CD8-positive, alpha-beta T cell (primary cell): ENCODE measurements at regions of chr1 and their contacts with region 1.

Region 1: DNA sequence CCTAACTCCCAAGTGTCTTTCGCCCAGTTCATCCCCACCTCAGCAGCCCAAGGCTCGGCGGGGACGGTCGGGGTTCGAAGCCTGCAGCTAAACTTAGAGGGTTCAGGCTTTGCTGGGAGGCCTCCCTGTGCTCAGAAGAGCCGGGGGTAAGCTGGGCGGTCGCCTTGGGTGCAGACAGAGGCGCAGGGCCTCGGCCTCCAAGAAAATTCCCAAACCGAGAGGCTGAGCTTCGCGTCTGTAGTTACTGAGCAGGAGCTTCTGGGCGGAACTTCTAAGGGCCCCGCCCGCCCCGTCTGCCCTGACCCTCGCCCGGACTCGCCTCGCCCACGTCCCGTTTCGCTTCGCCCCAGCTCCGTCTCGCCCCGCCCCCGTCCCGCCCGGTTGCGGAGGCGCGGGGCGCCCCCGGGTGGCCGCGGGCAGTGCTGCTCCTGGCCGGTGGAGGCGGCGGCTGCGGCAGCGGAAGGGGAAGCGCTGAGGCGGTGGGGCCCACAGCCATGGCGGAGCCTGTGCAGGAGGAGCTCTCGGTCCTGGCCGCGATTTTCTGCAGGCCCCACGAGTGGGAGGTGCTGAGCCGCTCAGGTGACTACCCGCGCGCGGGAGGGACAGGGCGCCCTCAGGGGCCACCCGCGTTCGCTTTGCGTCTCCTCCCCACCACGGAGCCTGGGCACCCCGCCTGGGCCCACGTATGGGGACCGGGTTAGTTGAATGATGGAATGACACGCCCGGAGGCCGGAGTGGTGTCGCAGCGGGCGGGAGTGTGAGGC is at the start of gene RWDD3:
- DNase-seq: peak; percentile 89 to 96 (median 91)
- ATAC-seq: peak; percentile 93
- H3K4me3 ChIP-seq: peak within 1 kb of the TSS; percentile 79 to 93
- H3K4me3 Mint-ChIP-seq: peak within 1 kb of the TSS; percentile 85
- H3K27ac ChIP-seq: peak within 1 kb of the TSS; percentile 72 to 73
- H3K27ac Mint-ChIP-seq: peak within 1 kb of the TSS; percentile 90
- H3K4me1 ChIP-seq: peaks cover 15% of the 10 kb centered on the region
- H3K4me1 Mint-ChIP-seq: peaks cover 46% of the 10 kb centered on the region
- H3K27me3 ChIP-seq: no peaks in the 10 kb centered on the region
- H3K27me3 Mint-ChIP-seq: peaks cover 8% of the 10 kb centered on the region
- CTCF ChIP-seq: peak; percentile 79
- total RNA-seq, gene RWDD3: 14.9 to 17.8 TPM

Region 2: DNA sequence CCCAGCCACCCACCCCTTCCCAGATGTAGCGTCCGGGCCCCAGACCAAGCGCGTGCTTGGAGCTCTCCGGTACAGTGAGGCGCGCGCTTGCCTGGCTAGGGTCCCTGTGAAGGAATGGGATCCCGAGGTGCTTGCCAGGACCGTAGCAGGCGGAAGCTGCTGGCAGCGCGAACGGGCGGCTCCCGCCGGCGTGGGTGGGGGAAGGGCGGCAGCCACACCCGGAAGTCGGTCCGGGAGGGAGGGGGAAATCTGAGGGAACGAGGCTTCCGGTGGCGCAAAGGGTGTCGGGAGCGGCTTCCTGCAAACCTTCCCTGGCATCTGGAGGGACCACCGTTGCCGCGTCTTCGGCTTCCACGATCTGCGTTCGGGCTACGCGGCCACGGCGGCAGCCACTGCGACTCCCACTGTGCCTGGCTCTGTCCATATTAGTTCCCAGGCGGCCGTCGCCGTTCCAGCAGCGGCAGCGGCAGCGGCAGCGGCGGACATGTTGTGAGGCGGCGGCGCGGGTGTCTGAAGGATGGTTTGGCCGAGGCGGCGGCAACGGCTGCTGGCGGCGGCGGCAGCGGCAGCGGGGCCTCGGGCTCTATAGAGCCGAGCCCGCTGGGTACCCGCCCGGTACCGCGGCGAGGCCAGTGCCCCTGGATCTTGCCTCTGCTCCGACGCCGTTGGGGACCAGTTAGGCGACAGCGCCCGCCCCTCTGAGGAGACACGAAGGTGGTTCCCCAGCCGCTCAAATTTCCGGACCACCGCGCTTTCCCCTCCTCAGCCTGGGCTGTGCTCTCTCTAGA is 1888.1 kb before region 1 on chr1 and contains the start of gene DR1:
- CTCF ChIA-PET with region 1: no interaction called
- POLR2A ChIA-PET with region 1: no interaction called
- intact Hi-C with region 1: loop called (anchors 5 to 10 kb)
- DNase-seq: peak; percentile 81 to 94 (median 90)
- ATAC-seq: peak; percentile 74
- H3K4me3 ChIP-seq: peak within 1 kb of the TSS; percentile 80 to 81
- H3K4me3 Mint-ChIP-seq: peak within 1 kb of the TSS; percentile 95
- H3K27ac ChIP-seq: peak within 1 kb of the TSS; percentile 72 to 91
- H3K27ac Mint-ChIP-seq: peak within 1 kb of the TSS; percentile 98
- H3K4me1 ChIP-seq: peaks cover 32% of the 10 kb centered on the region
- H3K4me1 Mint-ChIP-seq: peaks cover 51% of the 10 kb centered on the region
- H3K27me3 ChIP-seq: no peaks in the 10 kb centered on the region
- H3K27me3 Mint-ChIP-seq: no peaks in the 10 kb centered on the region
- CTCF ChIP-seq: no peak
- total RNA-seq, gene DR1: 49.1 to 49.9 TPM

Region 3: GRCh38 chr1:94854458-94855306 is 379.2 kb before region 1 on chr1:
- CTCF ChIA-PET with region 1: interaction called, 8 read pairs
- POLR2A ChIA-PET with region 1: interaction called, 7 read pairs
- intact Hi-C with region 1: loop called (anchors 1 kb)
- DNase-seq: peak; percentile 53 to 88 (median 74)
- ATAC-seq: peak; percentile 98
- H3K4me3 ChIP-seq: peak overlapping the region; percentile 50 to 51
- H3K4me3 Mint-ChIP-seq: no peak overlapping the region
- H3K27ac ChIP-seq: peak overlapping the region in 1 of 2 experiments; percentile 13
- H3K27ac Mint-ChIP-seq: no peak overlapping the region
- H3K4me1 ChIP-seq: no peaks in the 10 kb centered on the region
- H3K4me1 Mint-ChIP-seq: no peaks in the 10 kb centered on the region
- H3K27me3 ChIP-seq: no peaks in the 10 kb centered on the region
- H3K27me3 Mint-ChIP-seq: peaks cover 6% of the 10 kb centered on the region
- CTCF ChIP-seq: peak; percentile 72

Region 4: GRCh38 chr1:94962409-94963265 is 271.3 kb before region 1 on chr1:
- CTCF ChIA-PET with region 1: interaction called, 4 read pairs
- POLR2A ChIA-PET with region 1: interaction called, 3 read pairs
- intact Hi-C with region 1: loop called in 1 of 2 experiments (anchors 10 kb)
- DNase-seq: peak in 7 of 9 experiments; percentile 4 to 64 (median 22)
- ATAC-seq: peak; percentile 38
- H3K4me3 ChIP-seq: peak overlapping the region; percentile 57 to 64
- H3K4me3 Mint-ChIP-seq: peak overlapping the region; percentile 96
- H3K27ac ChIP-seq: peak overlapping the region; percentile 44 to 67
- H3K27ac Mint-ChIP-seq: peak overlapping the region; percentile 98
- H3K4me1 ChIP-seq: peaks cover 15% of the 10 kb centered on the region
- H3K4me1 Mint-ChIP-seq: peaks cover 19% of the 10 kb centered on the region
- H3K27me3 ChIP-seq: no peaks in the 10 kb centered on the region
- H3K27me3 Mint-ChIP-seq: no peaks in the 10 kb centered on the region
- CTCF ChIP-seq: no peak

Region 5: DNA sequence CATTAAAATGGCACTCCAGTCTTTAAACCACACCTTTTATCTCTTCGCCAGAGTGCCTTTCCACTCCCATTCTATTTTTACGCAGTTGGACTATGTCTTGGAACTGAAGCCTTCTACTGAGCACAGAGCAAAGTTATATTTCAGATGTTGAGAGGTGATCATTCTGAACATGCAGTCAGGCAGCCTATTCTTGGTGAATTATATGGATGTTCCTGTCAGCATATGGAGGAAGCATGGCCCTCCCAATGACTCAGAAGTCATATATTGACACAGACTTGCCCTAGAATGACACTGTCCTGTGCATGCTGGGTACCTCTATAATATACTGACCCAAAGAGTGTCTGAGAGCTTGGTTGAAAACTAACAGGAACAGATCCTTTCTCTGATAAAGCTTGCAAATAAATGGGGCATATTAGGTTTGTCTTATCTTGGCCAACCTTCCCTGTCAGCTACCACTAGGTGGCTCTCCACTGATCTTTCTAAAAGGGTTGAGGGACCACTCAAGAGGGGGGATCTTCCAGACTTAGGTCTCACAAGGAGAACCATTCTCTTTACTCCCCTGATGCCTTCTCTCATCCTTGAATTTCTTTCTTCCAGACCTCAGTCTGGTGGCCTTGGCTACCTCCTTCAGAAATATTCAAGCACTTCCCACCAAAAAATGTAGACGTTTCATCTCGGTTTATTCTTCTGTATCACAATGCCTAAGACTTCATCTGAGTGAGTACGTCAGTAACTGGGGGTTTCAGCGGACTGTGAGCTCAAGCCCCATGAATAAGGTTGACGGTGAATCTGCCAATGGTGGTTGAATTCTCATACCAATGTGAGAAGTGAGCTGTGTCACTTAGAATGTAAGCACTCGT is 149.4 kb before region 1 on chr1:
- CTCF ChIA-PET with region 1: interaction called, 6 read pairs
- POLR2A ChIA-PET with region 1: interaction called, 4 read pairs
- intact Hi-C with region 1: loop called in 1 of 2 experiments (anchors 1 kb)
- DNase-seq: peak in 5 of 9 experiments; percentile 17 to 60 (median 19)
- ATAC-seq: peak; percentile 66
- H3K4me3 ChIP-seq: no peak overlapping the region
- H3K4me3 Mint-ChIP-seq: no peak overlapping the region
- H3K27ac ChIP-seq: no peak overlapping the region
- H3K27ac Mint-ChIP-seq: no peak overlapping the region
- H3K4me1 ChIP-seq: no peaks in the 10 kb centered on the region
- H3K4me1 Mint-ChIP-seq: peaks cover 4% of the 10 kb centered on the region
- H3K27me3 ChIP-seq: no peaks in the 10 kb centered on the region
- H3K27me3 Mint-ChIP-seq: peaks cover 9% of the 10 kb centered on the region
- CTCF ChIP-seq: peak; percentile 63

Region 6: GRCh38 chr1:95246511-95246910 is 12.6 kb after region 1 on chr1:
- CTCF ChIA-PET with region 1: interaction called, 23 read pairs
- POLR2A ChIA-PET with region 1: interaction called, 13 read pairs
- intact Hi-C with region 1: no loop called
- DNase-seq: no peak
- ATAC-seq: no peak
- H3K4me3 ChIP-seq: no peak overlapping the region
- H3K4me3 Mint-ChIP-seq: no peak overlapping the region
- H3K27ac ChIP-seq: no peak overlapping the region
- H3K27ac Mint-ChIP-seq: no peak overlapping the region
- H3K4me1 ChIP-seq: no peaks in the 10 kb centered on the region
- H3K4me1 Mint-ChIP-seq: peaks cover 19% of the 10 kb centered on the region
- H3K27me3 ChIP-seq: no peaks in the 10 kb centered on the region
- H3K27me3 Mint-ChIP-seq: no peaks in the 10 kb centered on the region
- CTCF ChIP-seq: no peak